Activated naive CD4-positive, alpha-beta T cell treated with anti-CD3 and anti-CD28 coated beads for 36 hours (primary cell): ENCODE measurements at regions of chr11 and their contacts with region 1.

Region 1: GRCh38 chr11:35190804-35191348 is 51.9 kb downstream of the CD44 start:
- DNase-seq: peak; percentile 57
- H3K4me3 Mint-ChIP-seq: no peak overlapping the region
- H3K27ac Mint-ChIP-seq: peak overlapping the region; percentile 46
- H3K4me1 Mint-ChIP-seq: peaks cover 82% of the 10 kb centered on the region
- H3K27me3 Mint-ChIP-seq: no peaks in the 10 kb centered on the region

Region 2: GRCh38 chr11:35030716-35031213 is 160.1 kb before region 1 on chr11:
- CTCF ChIA-PET with region 1: no interaction called
- intact Hi-C with region 1: no loop called
- DNase-seq: peak; percentile 55
- H3K4me3 Mint-ChIP-seq: peak overlapping the region; percentile 59
- H3K27ac Mint-ChIP-seq: peak overlapping the region; percentile 93
- H3K4me1 Mint-ChIP-seq: peaks cover 44% of the 10 kb centered on the region
- H3K27me3 Mint-ChIP-seq: no peaks in the 10 kb centered on the region

Region 3: GRCh38 chr11:35204614-35205013 is 13.7 kb after region 1 on chr11:
- CTCF ChIA-PET with region 1: no interaction called
- intact Hi-C with region 1: loop called (anchors 1 kb)
- DNase-seq: no peak
- H3K4me3 Mint-ChIP-seq: no peak overlapping the region
- H3K27ac Mint-ChIP-seq: peak overlapping the region; percentile 65
- H3K4me1 Mint-ChIP-seq: peaks cover 28% of the 10 kb centered on the region
- H3K27me3 Mint-ChIP-seq: no peaks in the 10 kb centered on the region

Region 4: DNA sequence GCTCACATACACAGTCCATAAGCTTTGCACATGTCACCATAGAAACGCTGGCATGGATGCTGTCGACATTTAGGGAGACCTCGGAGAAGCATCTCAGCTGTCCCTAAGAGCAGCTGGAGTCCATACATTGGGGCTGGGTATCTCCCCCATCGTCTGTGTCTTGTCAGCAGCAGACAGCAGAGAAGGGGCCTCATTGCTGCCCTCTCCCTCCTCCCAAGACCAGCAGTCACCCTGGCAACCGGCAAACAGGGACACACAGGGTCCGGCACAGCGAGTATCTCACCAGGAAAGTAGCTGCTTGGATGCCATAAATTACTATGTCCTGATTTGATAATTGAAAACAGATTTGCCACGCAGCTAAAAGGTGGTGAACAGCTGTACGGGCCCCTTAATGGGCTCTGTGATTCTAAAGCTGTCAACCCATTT is 32.5 kb after region 1 on chr11:
- CTCF ChIA-PET with region 1: no interaction called
- intact Hi-C with region 1: no loop called
- DNase-seq: no peak
- H3K4me3 Mint-ChIP-seq: no peak overlapping the region
- H3K27ac Mint-ChIP-seq: no peak overlapping the region
- H3K4me1 Mint-ChIP-seq: peaks cover 10% of the 10 kb centered on the region
- H3K27me3 Mint-ChIP-seq: no peaks in the 10 kb centered on the region